ENCODE measurements at regions of chr16 and their contacts with region 1.

Region 1: GRCh38 chr16:30458561-30459394 is 13.1 kb upstream of the SEPHS2 start:
- DNase-seq: peak in 3 of 7 donors; percentile 24 to 53 (median 40)
- H3K4me3 ChIP-seq: no peak overlapping the region
- H3K27ac ChIP-seq: no peak overlapping the region
- H3K4me1 ChIP-seq: no peaks in the 10 kb centered on the region
- H3K27me3 ChIP-seq: no peaks in the 10 kb centered on the region
- CTCF ChIP-seq: no peak
- POLR2A ChIP-seq: no peak

Region 2: DNA sequence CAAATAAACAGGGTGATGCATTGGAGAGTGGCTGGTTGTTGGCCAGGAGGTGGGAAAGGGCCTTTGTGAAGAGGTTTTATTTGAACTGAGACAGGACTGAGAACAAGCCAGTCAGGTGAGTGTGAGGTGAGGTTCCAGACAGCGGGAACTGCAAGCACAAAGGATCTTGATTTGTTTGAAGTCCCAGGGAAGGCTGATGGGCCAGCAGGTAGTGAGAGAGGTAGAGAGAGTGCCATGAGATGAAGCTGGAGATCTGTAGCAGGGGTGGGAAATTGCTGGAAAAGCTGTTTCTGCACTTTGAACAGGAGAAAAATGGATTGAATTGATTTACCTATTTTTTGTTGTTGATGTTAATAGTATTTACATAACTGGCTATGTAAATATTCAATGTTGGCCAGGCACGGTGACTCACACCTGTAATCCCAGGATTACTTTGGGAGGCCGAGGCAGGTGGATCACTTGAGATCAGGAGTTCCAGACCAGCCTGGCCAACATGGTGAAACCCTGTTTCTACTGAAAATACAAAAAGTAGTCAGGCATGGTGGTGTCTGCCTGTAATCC is 21.2 kb before region 1 on chr16:
- intact Hi-C with region 1: no loop called
- DNase-seq: no peak
- H3K4me3 ChIP-seq: no peak overlapping the region
- H3K27ac ChIP-seq: no peak overlapping the region
- H3K4me1 ChIP-seq: no peaks in the 10 kb centered on the region
- H3K27me3 ChIP-seq: no peaks in the 10 kb centered on the region
- CTCF ChIP-seq: no peak
- POLR2A ChIP-seq: no peak

Region 3: GRCh38 chr16:30499284-30499683 is 40.5 kb after region 1 on chr16:
- intact Hi-C with region 1: no loop called
- DNase-seq: peak; percentile 38 to 66 (median 44)
- H3K4me3 ChIP-seq: peak overlapping the region in 2 of 4 donors; percentile 1 to 19
- H3K27ac ChIP-seq: peak overlapping the region in 1 of 5 donors; percentile 47
- H3K4me1 ChIP-seq: no peaks in the 10 kb centered on the region
- H3K27me3 ChIP-seq: no peaks in the 10 kb centered on the region
- CTCF ChIP-seq: no peak
- POLR2A ChIP-seq: peak in 1 of 2 donors; percentile 30

Region 4: DNA sequence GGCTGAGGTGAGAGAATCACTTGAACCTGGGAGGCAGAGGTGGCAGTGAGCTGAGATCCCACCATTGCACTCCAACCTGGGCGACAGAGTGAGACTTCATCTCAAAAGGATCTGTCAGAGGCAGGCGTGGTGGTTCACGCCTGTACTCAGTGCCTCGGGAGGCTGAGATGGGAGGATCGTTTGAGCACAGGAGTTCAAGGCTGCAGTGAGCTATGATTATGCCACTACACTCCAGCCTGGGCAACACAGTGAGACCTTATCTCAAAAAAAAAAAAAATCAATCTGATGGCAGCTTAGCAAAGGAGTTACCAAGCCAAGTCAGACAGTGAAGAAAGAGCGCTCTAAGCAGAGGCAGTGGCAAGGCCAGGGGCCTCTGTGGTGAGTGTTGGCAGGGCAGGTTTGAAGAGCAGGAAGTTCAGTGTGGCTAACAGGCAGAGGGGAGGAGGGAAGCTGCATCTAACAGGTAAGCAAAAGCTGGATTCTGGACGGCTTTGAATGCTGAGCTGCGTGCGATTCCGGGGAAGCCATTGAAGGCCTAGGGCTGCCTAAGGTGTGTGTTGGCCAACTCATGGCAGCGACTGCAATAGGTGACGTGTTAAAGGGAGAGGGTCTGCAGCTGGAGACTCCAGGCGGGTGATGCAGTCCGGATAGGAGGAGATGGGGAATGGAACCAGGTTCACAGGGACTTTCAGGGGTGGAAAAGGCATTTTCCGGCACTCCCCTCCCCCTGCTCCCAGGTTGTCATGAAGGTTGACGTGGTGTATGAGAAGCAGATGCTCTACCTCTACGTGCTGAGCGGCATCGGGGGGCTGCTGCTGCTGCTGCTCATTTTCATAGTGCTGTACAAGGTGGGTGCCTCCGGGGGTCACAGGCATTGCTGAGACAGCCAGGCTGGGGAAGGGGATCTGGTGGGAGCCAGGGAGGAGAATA is 60.6 kb after region 1 on chr16:
- intact Hi-C with region 1: loop called in 1 of 2 experiments (anchors 5 kb)
- DNase-seq: no peak
- H3K4me3 ChIP-seq: no peak overlapping the region
- H3K27ac ChIP-seq: no peak overlapping the region
- H3K4me1 ChIP-seq: peaks cover 0 to 3% of the 10 kb centered on the region in 2 donors
- H3K27me3 ChIP-seq: no peaks in the 10 kb centered on the region
- CTCF ChIP-seq: no peak
- POLR2A ChIP-seq: no peak

Region 5: GRCh38 chr16:30628627-30629540 is 170.1 kb after region 1 on chr16:
- intact Hi-C with region 1: loop called in 1 of 2 experiments (anchors 10 kb)
- DNase-seq: peak; percentile 84 to 95 (median 85)
- H3K4me3 ChIP-seq: peak overlapping the region in 1 of 4 donors; percentile 27
- H3K27ac ChIP-seq: peak overlapping the region in 1 of 5 donors; percentile 16
- H3K4me1 ChIP-seq: peaks cover 0 to 5% of the 10 kb centered on the region in 2 donors
- H3K27me3 ChIP-seq: no peaks in the 10 kb centered on the region
- CTCF ChIP-seq: peak; percentile 85 to 92 (median 89)
- POLR2A ChIP-seq: no peak

Region 6: GRCh38 chr16:30657866-30658730 is 199.3 kb after region 1 on chr16 and contains the start of gene FBRS:
- intact Hi-C with region 1: no loop called
- DNase-seq: peak; percentile 100
- H3K4me3 ChIP-seq: peak within 1 kb of the TSS; percentile 60 to 97 (median 90)
- H3K27ac ChIP-seq: peak within 1 kb of the TSS; percentile 92 to 99 (median 96)
- H3K4me1 ChIP-seq: peaks cover 26 to 43% of the 10 kb centered on the region in 2 donors
- H3K27me3 ChIP-seq: no peaks in the 10 kb centered on the region
- CTCF ChIP-seq: peak; percentile 48 to 90 (median 62)
- POLR2A ChIP-seq: peak; percentile 93
- total RNA-seq, gene FBRS: 19.6 to 84.0 (median 44.1) TPM